CD14-positive monocyte (primary cell): ENCODE measurements at regions of chr7 and their contacts with region 1.

Region 1: GRCh38 chr7:120987683-120988590 is 574 bp upstream of the CPED1 start:
- DNase-seq: peak; percentile 81 to 87 (median 83)
- H3K4me3 ChIP-seq: peak overlapping the region; percentile 43 to 88 (median 83)
- H3K4me3 Mint-ChIP-seq: peak overlapping the region; percentile 81 to 94
- H3K27ac ChIP-seq: peak overlapping the region in 1 of 2 donors; percentile 60
- H3K27ac Mint-ChIP-seq: peak overlapping the region in 5 of 7 donors; percentile 68 to 91 (median 75)
- H3K4me1 ChIP-seq: peaks cover 20 to 48% of the 10 kb centered on the region in 2 donors
- H3K4me1 Mint-ChIP-seq: peaks cover 45% of the 10 kb centered on the region
- H3K27me3 ChIP-seq: no peaks in the 10 kb centered on the region
- H3K27me3 Mint-ChIP-seq: peaks cover 1 to 15% (median 2%) of the 10 kb centered on the region in 3 donors
- CTCF ChIP-seq: peak; percentile 96

Region 2: GRCh38 chr7:120950539-120951308 is 37.2 kb before region 1 on chr7 and contains the start of gene ING3:
- intact Hi-C with region 1: no loop called
- DNase-seq: peak; percentile 96 to 99 (median 98)
- H3K4me3 ChIP-seq: peak within 1 kb of the TSS; percentile 71 to 82 (median 80)
- H3K4me3 Mint-ChIP-seq: peak within 1 kb of the TSS; percentile 90 to 95
- H3K27ac ChIP-seq: peak within 1 kb of the TSS; percentile 84 to 94
- H3K27ac Mint-ChIP-seq: peak within 1 kb of the TSS; percentile 97 to 100 (median 99)
- H3K4me1 ChIP-seq: peaks cover 13 to 19% of the 10 kb centered on the region in 2 donors
- H3K4me1 Mint-ChIP-seq: peaks cover 16% of the 10 kb centered on the region
- H3K27me3 ChIP-seq: no peaks in the 10 kb centered on the region
- H3K27me3 Mint-ChIP-seq: peaks cover 1 to 5% (median 3%) of the 10 kb centered on the region in 3 donors
- CTCF ChIP-seq: no peak
- polyA plus RNA-seq, gene ING3: 22.3 to 26.9 (median 25.9) TPM

Region 3: GRCh38 chr7:121012919-121013318 is 25.0 kb after region 1 on chr7:
- intact Hi-C with region 1: no loop called
- DNase-seq: no peak
- H3K4me3 ChIP-seq: no peak overlapping the region
- H3K4me3 Mint-ChIP-seq: no peak overlapping the region
- H3K27ac ChIP-seq: no peak overlapping the region
- H3K27ac Mint-ChIP-seq: no peak overlapping the region
- H3K4me1 ChIP-seq: peaks cover 0 to 6% of the 10 kb centered on the region in 2 donors
- H3K4me1 Mint-ChIP-seq: peaks cover 12% of the 10 kb centered on the region
- H3K27me3 ChIP-seq: no peaks in the 10 kb centered on the region
- H3K27me3 Mint-ChIP-seq: peaks cover 0 to 2% (median 2%) of the 10 kb centered on the region in 3 donors
- CTCF ChIP-seq: no peak

Region 4: DNA sequence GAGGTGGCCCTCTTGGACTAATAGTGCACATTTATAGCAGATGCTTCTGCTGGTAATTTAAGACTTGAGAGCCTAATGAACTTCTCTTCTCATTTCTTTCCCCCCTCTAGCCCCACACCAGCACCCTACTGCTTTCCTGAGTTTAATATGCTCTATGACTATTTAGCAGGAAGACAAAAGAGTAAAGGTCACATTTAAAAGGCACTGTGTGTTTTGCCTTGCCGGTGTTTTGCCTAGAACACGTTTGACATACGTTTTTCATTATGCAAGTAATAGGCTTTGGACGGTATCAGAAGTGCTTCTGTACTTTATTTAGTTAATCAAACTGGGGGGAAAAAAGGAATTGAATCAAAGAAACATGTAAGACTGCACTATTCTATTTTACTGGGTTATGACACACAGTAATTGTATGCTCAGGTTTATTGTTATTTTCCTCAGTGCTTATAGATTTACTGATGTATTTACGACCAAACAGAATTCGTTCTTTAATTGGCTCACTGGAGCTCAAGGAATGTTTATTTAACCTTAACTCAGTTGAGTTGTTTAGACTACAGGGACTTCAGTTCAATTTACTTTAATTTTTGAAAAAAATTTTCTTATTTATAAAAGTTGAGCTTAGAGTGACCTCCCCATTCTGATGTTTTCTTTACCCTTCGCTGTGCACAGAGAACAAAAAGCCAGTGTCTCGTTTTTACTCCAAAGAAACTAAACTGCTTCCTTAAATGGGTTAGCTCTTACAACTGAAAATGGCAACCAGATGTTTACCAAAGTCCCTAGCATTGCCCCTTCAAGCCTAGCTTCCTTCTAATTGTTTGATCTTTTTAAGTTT is 36.0 kb after region 1 on chr7:
- intact Hi-C with region 1: loop called in 1 of 2 experiments (anchors 2 kb)
- DNase-seq: no peak
- H3K4me3 ChIP-seq: no peak overlapping the region
- H3K4me3 Mint-ChIP-seq: no peak overlapping the region
- H3K27ac ChIP-seq: peak overlapping the region in 1 of 2 donors; percentile 80
- H3K27ac Mint-ChIP-seq: peak overlapping the region; percentile 63 to 86 (median 79)
- H3K4me1 ChIP-seq: peaks cover 46 to 68% of the 10 kb centered on the region in 2 donors
- H3K4me1 Mint-ChIP-seq: peaks cover 63% of the 10 kb centered on the region
- H3K27me3 ChIP-seq: no peaks in the 10 kb centered on the region
- H3K27me3 Mint-ChIP-seq: peaks cover 0 to 4% (median 0%) of the 10 kb centered on the region in 3 donors
- CTCF ChIP-seq: no peak

Region 5: DNA sequence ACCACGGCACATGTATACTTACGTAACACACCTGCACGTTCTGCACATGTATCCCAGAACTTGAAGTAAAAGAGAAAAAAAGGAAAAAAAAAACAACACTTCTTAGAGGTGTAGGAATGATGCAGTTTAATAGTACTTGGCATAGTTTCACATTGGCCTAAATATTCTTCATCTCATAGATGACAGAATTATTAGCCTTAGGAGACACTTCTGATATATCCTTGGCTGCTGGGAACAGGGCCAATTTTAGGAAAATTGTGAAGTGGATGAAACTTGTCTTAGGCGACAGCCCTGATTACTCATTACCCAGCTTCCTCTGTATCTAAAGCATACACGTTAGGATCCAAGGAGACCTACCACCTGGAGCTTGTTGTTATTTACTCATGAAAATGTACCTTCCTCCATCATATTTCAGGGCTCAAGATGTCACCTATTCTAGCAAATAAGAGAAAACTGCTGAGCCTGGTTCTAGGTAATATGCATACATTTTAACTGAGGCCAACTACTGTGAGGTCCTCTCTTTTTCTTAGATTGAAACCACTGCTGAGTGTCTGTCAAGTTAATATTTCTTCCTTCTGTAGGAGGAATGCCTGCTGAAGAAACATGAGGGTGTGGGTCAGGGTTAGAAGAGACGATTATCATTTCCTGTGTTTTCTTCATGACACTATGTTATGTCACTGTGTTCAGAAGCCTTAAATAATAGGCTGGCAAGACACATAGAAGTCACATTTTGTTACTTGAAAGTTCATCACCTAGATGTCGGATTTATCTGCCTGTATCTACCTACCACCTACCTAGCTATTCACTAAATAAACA is 44.9 kb after region 1 on chr7:
- intact Hi-C with region 1: loop called in 1 of 2 experiments (anchors 10 kb)
- DNase-seq: no peak
- H3K4me3 ChIP-seq: no peak overlapping the region
- H3K4me3 Mint-ChIP-seq: no peak overlapping the region
- H3K27ac ChIP-seq: no peak overlapping the region
- H3K27ac Mint-ChIP-seq: peak overlapping the region in 2 of 7 donors; percentile 1 to 14
- H3K4me1 ChIP-seq: peaks cover 0 to 7% of the 10 kb centered on the region in 2 donors
- H3K4me1 Mint-ChIP-seq: peaks cover 8% of the 10 kb centered on the region
- H3K27me3 ChIP-seq: no peaks in the 10 kb centered on the region
- H3K27me3 Mint-ChIP-seq: no peaks in the 10 kb centered on the region
- CTCF ChIP-seq: no peak

Region 6: GRCh38 chr7:121081327-121081936 is 93.5 kb after region 1 on chr7:
- intact Hi-C with region 1: loop called (anchors 2 to 5 kb)
- DNase-seq: peak; percentile 48 to 72 (median 62)
- H3K4me3 ChIP-seq: no peak overlapping the region
- H3K4me3 Mint-ChIP-seq: no peak overlapping the region
- H3K27ac ChIP-seq: no peak overlapping the region
- H3K27ac Mint-ChIP-seq: no peak overlapping the region
- H3K4me1 ChIP-seq: no peaks in the 10 kb centered on the region
- H3K4me1 Mint-ChIP-seq: peaks cover 5% of the 10 kb centered on the region
- H3K27me3 ChIP-seq: no peaks in the 10 kb centered on the region
- H3K27me3 Mint-ChIP-seq: peaks cover 0 to 2% (median 0%) of the 10 kb centered on the region in 3 donors
- CTCF ChIP-seq: peak; percentile 77

Region 7: GRCh38 chr7:121107923-121108498 is 120.1 kb after region 1 on chr7:
- intact Hi-C with region 1: loop called in 1 of 2 experiments (anchors 5 kb)
- DNase-seq: peak; percentile 26 to 65 (median 49)
- H3K4me3 ChIP-seq: no peak overlapping the region
- H3K4me3 Mint-ChIP-seq: no peak overlapping the region
- H3K27ac ChIP-seq: no peak overlapping the region
- H3K27ac Mint-ChIP-seq: no peak overlapping the region
- H3K4me1 ChIP-seq: no peaks in the 10 kb centered on the region
- H3K4me1 Mint-ChIP-seq: no peaks in the 10 kb centered on the region
- H3K27me3 ChIP-seq: no peaks in the 10 kb centered on the region
- H3K27me3 Mint-ChIP-seq: peaks cover 0 to 1% (median 0%) of the 10 kb centered on the region in 3 donors
- CTCF ChIP-seq: peak; percentile 89